A673 (cell line): ENCODE measurements at regions of chr2 and their contacts with region 1.

Region 1: DNA sequence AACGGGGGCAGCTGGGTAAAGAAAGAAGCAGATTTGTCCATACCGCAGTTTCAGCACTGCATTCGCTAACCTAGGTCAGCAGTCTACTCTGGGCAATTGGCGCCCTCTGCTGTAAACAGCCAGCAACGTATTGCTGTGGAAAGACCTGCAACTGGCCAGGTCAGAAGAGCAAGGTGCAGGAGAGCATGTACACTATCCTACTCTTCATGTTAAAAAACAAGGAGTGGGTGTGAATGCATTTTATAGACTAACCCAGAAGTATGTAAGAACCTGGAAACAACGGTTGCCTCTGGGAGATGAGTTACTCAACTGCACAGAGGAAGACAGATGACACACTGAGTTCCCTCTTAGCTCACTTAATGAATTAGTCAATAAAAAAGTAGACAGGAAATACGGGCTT is 6.2 kb downstream of the MRPS5 start:
- DNase-seq: peak; percentile 62
- H3K4me3 ChIP-seq: no peak overlapping the region
- H3K27ac ChIP-seq: no peak overlapping the region
- H3K4me1 ChIP-seq: no peaks in the 10 kb centered on the region
- H3K27me3 ChIP-seq: no peaks in the 10 kb centered on the region
- CTCF ChIP-seq: peak; percentile 88

Region 2: DNA sequence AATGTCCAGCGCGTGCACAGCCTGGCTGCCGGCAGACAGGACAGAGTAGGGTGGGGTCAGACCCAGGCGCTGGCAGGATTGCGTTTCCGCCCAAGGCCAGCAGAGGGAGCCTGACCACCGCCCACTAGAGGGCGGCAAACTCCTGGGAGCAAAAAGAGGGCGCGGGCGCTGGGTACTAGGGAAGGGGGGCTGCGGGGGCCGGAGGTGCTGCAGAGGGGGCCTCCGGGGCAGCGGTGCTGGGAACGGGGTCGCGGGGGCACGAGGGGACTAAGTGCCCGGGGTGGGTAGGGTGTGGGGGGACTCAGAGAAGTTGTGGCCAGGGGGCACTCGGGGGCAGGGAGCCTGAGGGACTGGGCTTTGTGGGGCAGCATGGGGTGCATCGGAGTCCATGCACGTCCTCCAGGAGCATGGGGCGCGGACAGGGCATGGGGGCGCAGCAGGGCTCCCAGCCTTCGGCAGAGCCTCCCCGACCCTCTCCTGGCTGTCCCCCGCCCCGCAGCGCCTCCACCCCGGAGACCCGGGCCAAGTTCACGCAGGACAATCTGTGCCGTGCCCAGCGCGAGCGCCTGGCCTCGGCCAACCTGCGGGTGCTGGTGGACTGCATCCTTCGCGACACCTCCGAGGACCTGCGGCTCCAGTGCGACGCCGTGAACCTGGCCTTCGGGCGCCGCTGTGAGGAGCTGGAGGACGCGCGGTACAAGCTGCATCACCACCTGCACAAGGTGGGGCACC is 241.0 kb before region 1 on chr2:
- CTCF ChIA-PET with region 1: interaction called, 3 read pairs
- POLR2A ChIA-PET with region 1: no interaction called
- intact Hi-C with region 1: loop called (anchors 5 kb)
- DNase-seq: peak; percentile 59
- H3K4me3 ChIP-seq: no peak overlapping the region
- H3K27ac ChIP-seq: no peak overlapping the region
- H3K4me1 ChIP-seq: no peaks in the 10 kb centered on the region
- H3K27me3 ChIP-seq: peaks cover 21% of the 10 kb centered on the region
- CTCF ChIP-seq: peak; percentile 99

Region 3: GRCh38 chr2:94986392-94986963 is 128.9 kb before region 1 on chr2:
- CTCF ChIA-PET with region 1: interaction called, 7 read pairs
- POLR2A ChIA-PET with region 1: no interaction called
- intact Hi-C with region 1: loop called (anchors 1 kb)
- DNase-seq: peak; percentile 76
- H3K4me3 ChIP-seq: no peak overlapping the region
- H3K27ac ChIP-seq: no peak overlapping the region
- H3K4me1 ChIP-seq: no peaks in the 10 kb centered on the region
- H3K27me3 ChIP-seq: peaks cover 18% of the 10 kb centered on the region
- CTCF ChIP-seq: peak; percentile 76

Region 4: DNA sequence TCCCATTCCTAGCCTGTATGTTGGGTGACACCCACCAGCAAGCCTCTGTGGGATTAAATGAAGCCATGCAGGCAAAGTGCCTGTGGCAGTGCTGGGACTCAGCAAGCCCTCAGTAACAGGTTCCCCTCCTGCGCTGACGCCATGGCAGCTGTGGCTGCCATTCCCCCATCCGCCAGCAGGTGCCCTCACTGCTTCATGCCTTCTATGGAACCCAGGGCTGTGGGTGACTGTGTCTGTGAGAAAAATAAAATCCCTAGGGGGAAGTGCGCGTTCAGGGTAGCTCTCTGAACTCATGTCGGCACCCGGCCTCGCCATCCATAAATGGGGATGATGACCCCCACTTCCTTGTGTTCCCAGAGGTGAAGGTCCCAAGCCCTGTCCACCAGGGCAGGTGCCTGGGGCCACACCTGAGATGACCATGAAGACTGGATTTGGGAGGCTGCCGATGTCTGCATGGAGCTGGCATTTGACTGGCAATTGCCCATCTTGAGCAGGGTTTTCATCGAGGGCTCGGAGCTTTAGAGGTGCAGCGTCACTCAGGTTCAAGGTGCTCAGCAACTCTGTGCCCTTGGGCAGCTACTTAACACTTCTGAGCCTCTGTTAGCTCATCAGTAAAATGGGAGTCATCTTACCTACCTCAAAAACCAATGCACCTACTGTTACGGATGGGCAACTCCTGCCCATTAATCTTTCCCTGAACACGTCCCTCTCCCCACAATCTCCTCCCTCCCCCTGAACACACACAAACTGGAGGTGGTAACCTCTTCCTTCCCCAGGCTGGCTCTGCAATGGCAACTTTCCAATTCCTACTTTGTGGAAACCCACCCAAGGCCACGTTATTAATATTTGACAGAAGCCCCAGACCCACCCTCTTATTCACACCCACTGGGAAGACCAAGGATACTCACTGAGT is 92.9 kb before region 1 on chr2:
- CTCF ChIA-PET with region 1: no interaction called
- POLR2A ChIA-PET with region 1: no interaction called
- intact Hi-C with region 1: loop called (anchors 10 kb)
- DNase-seq: peak; percentile 81
- H3K4me3 ChIP-seq: no peak overlapping the region
- H3K27ac ChIP-seq: no peak overlapping the region
- H3K4me1 ChIP-seq: peaks cover 6% of the 10 kb centered on the region
- H3K27me3 ChIP-seq: peaks cover 50% of the 10 kb centered on the region
- CTCF ChIP-seq: peak; percentile 93

Region 5: DNA sequence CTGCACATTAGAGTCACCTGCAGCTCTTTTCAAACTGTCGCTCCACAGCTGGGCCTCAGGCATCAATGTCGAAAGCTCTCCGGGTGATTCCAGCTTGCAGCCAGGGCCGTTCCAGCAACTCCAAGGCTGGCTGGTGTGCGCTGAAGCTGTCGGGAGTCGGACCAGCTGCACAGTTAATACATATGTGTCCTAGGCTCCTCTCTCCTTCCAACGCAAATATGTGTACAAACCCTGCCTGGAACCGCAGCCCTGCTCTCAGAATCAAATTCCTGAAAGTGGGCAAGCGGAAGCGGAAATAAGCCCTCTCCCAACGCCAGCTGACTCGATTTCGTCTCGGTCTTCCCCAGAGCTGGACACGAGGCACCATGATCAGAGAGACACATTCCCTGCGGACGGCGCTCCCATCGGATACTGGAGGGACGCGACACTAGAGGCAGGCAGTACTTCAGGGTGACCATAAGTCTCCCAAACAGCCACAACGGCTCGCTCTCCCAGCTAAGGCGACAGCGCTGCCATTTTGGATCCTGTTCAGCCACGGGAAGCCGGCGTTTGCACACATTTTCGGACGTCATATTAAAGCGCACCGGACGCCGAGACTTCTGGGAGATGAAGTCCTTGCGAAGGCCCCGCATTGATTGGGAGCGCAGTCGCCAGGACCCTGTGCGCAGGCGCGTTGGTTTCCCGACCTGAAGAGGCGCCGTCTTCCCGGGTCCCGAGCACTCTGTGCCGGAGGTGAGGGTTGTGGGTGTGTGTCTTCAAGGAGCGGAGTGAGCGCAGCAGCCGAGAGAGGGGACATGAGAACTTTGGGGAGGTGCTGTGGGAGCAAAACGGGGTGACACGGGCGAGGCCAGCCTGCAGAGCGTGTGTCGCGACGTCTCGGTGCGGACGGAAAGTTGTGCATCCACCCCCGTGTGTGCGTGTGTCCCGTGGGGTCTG is 50.0 kb after region 1 on chr2 and contains the start of gene ZNF2:
- CTCF ChIA-PET with region 1: no interaction called
- POLR2A ChIA-PET with region 1: no interaction called
- intact Hi-C with region 1: loop called (anchors 5 kb)
- DNase-seq: peak; percentile 99
- H3K4me3 ChIP-seq: peak within 1 kb of the TSS; percentile 88
- H3K27ac ChIP-seq: peak within 1 kb of the TSS; percentile 92
- H3K4me1 ChIP-seq: peaks cover 6% of the 10 kb centered on the region
- H3K27me3 ChIP-seq: no peaks in the 10 kb centered on the region
- CTCF ChIP-seq: no peak
- total RNA-seq, gene ZNF2: 4.6 and 5.6 TPM in 2 replicates